Activated CD4-positive, alpha-beta memory T cell treated with anti-CD3 and anti-CD28 coated beads for 36 hours (primary cell): ENCODE measurements at regions of chr9 and their contacts with region 1.

Region 1: DNA sequence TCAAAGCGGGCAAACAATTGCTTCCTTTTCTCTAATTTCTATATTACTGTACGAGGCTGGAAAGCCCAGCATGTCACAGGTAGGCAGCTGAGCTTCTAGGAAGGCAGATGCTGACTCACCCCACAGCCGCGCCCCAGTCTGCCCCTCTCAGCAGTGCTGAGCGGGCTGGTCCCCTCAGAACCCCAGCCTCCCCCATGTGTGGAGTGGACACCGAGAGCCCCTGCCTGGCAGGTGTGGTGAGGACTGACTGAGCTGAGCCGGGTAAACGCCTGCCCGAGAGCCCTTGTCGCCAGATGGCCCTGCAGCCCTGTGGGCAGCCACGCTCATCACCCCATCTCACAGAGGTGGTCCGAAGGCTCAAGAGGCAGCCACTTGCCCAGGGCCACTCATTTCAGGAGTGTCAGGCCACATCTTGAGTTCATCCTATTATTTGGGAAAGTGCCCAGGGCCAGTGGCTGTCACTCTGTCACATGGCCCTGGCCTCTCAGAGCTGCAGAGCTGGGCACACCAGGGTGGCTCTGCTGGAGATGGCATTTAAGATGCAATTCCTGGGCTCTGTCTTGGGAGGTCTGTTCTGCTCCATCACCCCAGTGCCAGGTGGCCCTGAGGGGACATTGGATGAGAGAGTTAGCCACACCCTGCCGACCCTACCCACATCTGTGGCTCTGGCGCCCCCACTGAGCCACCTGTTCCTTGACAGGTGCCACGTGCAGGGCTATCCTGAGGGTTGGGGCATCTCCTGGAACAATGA is 12.4 kb downstream of the CARD19 start:
- DNase-seq: peak; percentile 82
- H3K4me3 Mint-ChIP-seq: no peak overlapping the region
- H3K27ac Mint-ChIP-seq: peak overlapping the region; percentile 77
- H3K4me1 Mint-ChIP-seq: peaks cover 55% of the 10 kb centered on the region
- H3K27me3 Mint-ChIP-seq: no peaks in the 10 kb centered on the region

Region 2: DNA sequence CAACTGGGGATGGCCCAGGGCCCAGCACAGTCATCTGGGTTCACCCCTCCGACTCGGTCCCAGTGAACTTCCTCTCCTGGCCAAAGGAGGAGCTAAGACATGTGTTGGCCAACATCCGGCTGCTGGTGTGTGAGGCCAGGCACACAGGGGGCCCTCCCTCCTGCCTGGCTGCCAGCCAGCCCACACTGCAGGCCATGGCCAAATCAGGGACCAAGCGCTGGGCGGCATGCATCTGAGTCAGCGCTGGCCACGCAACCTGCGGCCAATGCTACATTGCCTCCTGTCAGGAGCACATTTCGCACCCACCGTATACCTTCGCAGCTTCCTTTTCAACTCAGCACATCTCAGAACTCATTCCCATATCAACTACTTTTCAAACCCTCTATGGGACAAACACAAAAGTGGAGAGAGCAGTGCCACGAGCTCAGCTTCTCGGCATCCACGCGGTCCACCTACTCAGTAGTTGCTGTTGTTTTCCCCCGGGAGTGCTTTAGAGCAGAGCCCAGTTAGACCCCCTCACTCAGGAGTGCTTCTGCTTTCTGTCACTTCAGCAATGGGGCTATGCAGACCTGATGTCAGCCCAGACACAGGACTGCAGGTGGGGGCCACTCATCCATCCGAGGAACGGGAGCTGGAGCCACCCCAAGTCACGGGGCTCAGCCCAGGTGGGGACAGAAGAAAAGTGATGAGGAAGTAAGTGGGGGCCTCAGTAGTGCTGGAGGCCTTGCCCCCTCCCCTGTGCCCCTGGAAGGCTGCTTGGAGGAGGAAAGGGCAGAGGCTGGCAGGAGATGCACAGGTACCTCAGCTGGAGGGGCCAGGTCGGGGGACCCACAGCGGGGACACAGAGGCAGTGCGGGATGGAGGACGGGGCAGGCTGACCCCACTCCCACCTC is 11.7 kb after region 1 on chr9:
- CTCF ChIA-PET with region 1: interaction called, 34 read pairs
- POLR2A ChIA-PET with region 1: interaction called, 3 read pairs
- intact Hi-C with region 1: no loop called
- DNase-seq: peak; percentile 64
- H3K4me3 Mint-ChIP-seq: peak overlapping the region; percentile 35
- H3K27ac Mint-ChIP-seq: peak overlapping the region; percentile 75
- H3K4me1 Mint-ChIP-seq: peaks cover 10% of the 10 kb centered on the region
- H3K27me3 Mint-ChIP-seq: no peaks in the 10 kb centered on the region

Region 3: GRCh38 chr9:93134015-93134739 is 25.7 kb after region 1 on chr9 and contains the start of gene NINJ1:
- CTCF ChIA-PET with region 1: interaction called, 27 read pairs
- POLR2A ChIA-PET with region 1: interaction called, 6 read pairs
- intact Hi-C with region 1: no loop called
- DNase-seq: peak; percentile 94
- H3K4me3 Mint-ChIP-seq: peak within 1 kb of the TSS; percentile 94
- H3K27ac Mint-ChIP-seq: peak within 1 kb of the TSS; percentile 89
- H3K4me1 Mint-ChIP-seq: peaks cover 60% of the 10 kb centered on the region
- H3K27me3 Mint-ChIP-seq: no peaks in the 10 kb centered on the region
- total RNA-seq, gene NINJ1: 77.9 to 82.0 TPM

Region 4: GRCh38 chr9:93159601-93160471 is 51.4 kb after region 1 on chr9:
- CTCF ChIA-PET with region 1: interaction called, 31 read pairs
- POLR2A ChIA-PET with region 1: no interaction called
- intact Hi-C with region 1: no loop called
- DNase-seq: peak; percentile 84
- H3K4me3 Mint-ChIP-seq: no peak overlapping the region
- H3K27ac Mint-ChIP-seq: no peak overlapping the region
- H3K4me1 Mint-ChIP-seq: peaks cover 24% of the 10 kb centered on the region
- H3K27me3 Mint-ChIP-seq: no peaks in the 10 kb centered on the region